ENCODE measurements at regions of chr2 and their contacts with region 1.

Region 1: GRCh38 chr2:227766373-227766883 is 20.7 kb downstream of the SCYGR8 start:
- DNase-seq: peak; percentile 65
- H3K4me3 ChIP-seq: no peak overlapping the region
- H3K27ac ChIP-seq: no peak overlapping the region
- H3K4me1 ChIP-seq: no peaks in the 10 kb centered on the region
- CTCF ChIP-seq: peak; percentile 90

Region 2: GRCh38 chr2:227125506-227125905 is 640.9 kb before region 1 on chr2:
- CTCF ChIA-PET with region 1: no interaction called
- POLR2A ChIA-PET with region 1: no interaction called
- intact Hi-C with region 1: loop called (anchors 1 kb)
- DNase-seq: no peak
- H3K4me3 ChIP-seq: no peak overlapping the region
- H3K27ac ChIP-seq: no peak overlapping the region
- H3K4me1 ChIP-seq: no peaks in the 10 kb centered on the region
- CTCF ChIP-seq: 0 out of 2 replicates have a peak, but pooled peaks have one; percentile 19

Region 3: GRCh38 chr2:227406177-227407031 is 360.0 kb before region 1 on chr2:
- CTCF ChIA-PET with region 1: no interaction called
- POLR2A ChIA-PET with region 1: no interaction called
- intact Hi-C with region 1: loop called (anchors 10 kb)
- DNase-seq: peak; percentile 5
- H3K4me3 ChIP-seq: no peak overlapping the region
- H3K27ac ChIP-seq: no peak overlapping the region
- H3K4me1 ChIP-seq: no peaks in the 10 kb centered on the region
- CTCF ChIP-seq: peak; percentile 64

Region 4: DNA sequence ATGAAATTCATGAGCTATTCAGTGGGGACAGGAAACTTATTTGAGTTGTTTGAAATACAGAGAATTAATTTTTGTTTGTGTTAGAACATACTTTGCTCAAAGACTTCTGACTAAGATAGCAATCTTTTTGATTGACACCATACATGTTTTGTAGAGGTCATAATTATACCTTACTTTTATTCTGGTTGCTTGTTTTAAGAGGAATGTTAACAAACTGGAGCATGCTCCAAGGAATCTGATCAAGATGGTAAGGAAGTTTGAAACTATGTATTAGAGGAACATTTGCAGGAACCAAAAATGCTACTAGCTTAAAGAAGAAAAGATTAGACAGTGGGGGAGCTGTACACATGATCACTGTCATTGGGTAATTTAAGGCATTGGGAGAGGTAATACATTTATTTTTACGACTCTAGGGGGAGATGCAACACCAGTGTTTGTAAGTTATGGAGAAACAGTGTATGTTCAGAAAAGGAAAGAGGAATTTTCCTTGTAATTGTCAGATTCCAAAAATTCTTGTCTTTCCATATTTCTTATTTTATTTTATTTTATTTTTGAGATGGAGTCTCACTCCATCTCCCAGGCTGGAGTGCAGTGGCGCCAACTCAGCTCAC is 286.5 kb before region 1 on chr2:
- CTCF ChIA-PET with region 1: no interaction called
- POLR2A ChIA-PET with region 1: interaction called, 3 read pairs
- intact Hi-C with region 1: loop called (anchors 2 kb)
- DNase-seq: peak; percentile 31
- H3K4me3 ChIP-seq: no peak overlapping the region
- H3K27ac ChIP-seq: no peak overlapping the region
- H3K4me1 ChIP-seq: peaks cover 39% of the 10 kb centered on the region
- CTCF ChIP-seq: peak; percentile 74

Region 5: GRCh38 chr2:227655454-227655853 is 111.0 kb before region 1 on chr2:
- CTCF ChIA-PET with region 1: interaction called, 5 read pairs
- POLR2A ChIA-PET with region 1: no interaction called
- intact Hi-C with region 1: loop called (anchors 1 kb)
- DNase-seq: no peak
- H3K4me3 ChIP-seq: no peak overlapping the region
- H3K27ac ChIP-seq: no peak overlapping the region
- H3K4me1 ChIP-seq: no peaks in the 10 kb centered on the region
- CTCF ChIP-seq: no peak

Region 6: GRCh38 chr2:228094377-228094921 is 328.0 kb after region 1 on chr2:
- CTCF ChIA-PET with region 1: no interaction called
- POLR2A ChIA-PET with region 1: no interaction called
- intact Hi-C with region 1: no loop called
- DNase-seq: no peak
- H3K4me3 ChIP-seq: no peak overlapping the region
- H3K27ac ChIP-seq: no peak overlapping the region
- H3K4me1 ChIP-seq: no peaks in the 10 kb centered on the region
- CTCF ChIP-seq: no peak

Measured in OCI-LY7 (cell line).